Colonic mucosa (tissue), 4 donors: ENCODE measurements at regions of chr6 and their contacts with region 1.

Region 1: GRCh38 chr6:146700078-146700686 is 101.4 kb downstream of the ADGB start:
- DNase-seq: peak; percentile 86
- H3K4me3 ChIP-seq: no peak overlapping the region
- H3K27ac ChIP-seq: no peak overlapping the region
- H3K4me1 ChIP-seq: no peaks in the 10 kb centered on the region
- H3K27me3 ChIP-seq: no peaks in the 10 kb centered on the region
- CTCF ChIP-seq: peak; percentile 65

Region 2: GRCh38 chr6:145929037-145929633 is 771.0 kb before region 1 on chr6:
- intact Hi-C with region 1: loop called (anchors 5 kb)
- DNase-seq: peak; percentile 21
- H3K4me3 ChIP-seq: no peak overlapping the region
- H3K27ac ChIP-seq: no peak overlapping the region
- H3K4me1 ChIP-seq: no peaks in the 10 kb centered on the region
- H3K27me3 ChIP-seq: no peaks in the 10 kb centered on the region
- CTCF ChIP-seq: peak; percentile 67

Region 3: DNA sequence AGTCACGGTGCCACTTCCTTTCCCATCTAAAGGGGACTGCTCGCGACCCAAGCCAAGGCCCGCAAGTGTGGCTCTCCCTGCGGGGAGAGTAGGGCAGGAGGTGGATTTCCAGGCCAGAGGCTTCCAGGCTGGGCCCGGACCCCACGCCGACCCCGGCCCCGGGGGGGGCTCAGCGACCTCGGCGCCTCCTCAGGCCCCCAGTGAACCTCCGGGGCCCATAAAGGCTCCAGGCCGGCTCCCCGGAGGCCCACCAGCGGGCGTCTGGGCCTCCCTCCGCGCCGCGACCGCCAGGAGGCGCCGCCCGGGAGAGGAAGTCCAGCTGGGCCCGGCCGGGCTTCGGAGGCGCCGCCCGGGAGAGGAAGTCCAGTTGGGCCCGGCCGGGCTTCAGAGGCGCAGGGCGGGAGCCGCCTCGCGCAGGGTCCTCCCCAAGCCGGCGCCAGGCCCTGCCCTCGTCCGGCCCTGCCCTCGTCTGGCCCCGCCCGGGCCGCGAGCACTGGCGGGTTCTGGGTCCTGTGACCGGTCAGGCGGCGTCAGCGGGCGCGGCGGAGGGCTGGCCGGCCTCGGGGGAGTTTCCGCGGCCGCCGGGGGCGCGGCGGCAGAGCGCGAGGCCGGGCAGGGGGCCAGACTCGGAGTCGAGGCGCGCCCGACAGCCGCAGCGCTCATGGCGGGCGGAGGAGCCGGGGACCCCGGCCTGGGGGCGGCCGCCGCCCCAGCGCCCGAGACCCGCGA is 156.8 kb before region 1 on chr6 and contains the start of gene RAB32:
- intact Hi-C with region 1: loop called (anchors 5 kb)
- DNase-seq: peak; percentile 94
- H3K4me3 ChIP-seq: peak within 1 kb of the TSS; percentile 64
- H3K27ac ChIP-seq: peak within 1 kb of the TSS; percentile 98
- H3K4me1 ChIP-seq: no peaks in the 10 kb centered on the region
- H3K27me3 ChIP-seq: no peaks in the 10 kb centered on the region
- CTCF ChIP-seq: peak; percentile 72
- total RNA-seq, gene RAB32: 54.6 to 68.0 TPM